OCI-LY7 (cell line): ENCODE measurements at regions of chr15 and their contacts with region 1.

Region 1: DNA sequence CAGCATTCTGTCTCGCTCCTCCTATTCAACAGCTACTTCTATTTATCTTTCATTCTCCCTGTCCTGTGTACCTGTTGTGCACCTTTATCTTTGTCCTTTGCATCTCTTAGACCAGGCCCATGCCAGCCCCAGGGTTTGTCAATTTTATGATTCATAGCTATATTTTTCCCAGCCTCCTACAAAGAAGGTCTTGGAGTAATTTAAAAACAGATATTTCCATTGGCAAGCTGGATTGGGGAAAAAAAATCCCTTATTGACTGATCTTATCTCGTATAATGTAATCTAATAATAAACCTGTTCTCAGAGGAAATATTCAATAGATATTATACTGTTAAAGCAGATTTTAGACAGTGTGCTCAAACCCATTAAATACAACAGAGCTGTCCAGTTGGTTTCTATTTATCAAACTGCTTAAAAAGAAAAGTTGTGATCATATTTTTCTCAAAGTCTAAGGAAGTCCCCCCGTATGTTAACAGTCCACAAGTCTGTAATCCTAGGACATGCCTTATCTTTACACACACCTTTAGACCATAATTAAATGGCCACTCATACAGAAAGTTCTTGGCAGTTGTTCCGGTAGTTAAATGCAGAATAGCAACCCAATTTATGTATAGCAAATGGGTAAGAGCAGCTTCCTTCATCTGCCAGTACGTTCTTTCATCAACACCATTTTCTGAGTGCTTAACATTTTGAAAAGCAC is 700.9 kb upstream of the NR2F2 start:
- DNase-seq: no peak
- H3K4me3 ChIP-seq: no peak overlapping the region
- H3K27ac ChIP-seq: no peak overlapping the region
- H3K4me1 ChIP-seq: no peaks in the 10 kb centered on the region
- CTCF ChIP-seq: no peak

Region 2: DNA sequence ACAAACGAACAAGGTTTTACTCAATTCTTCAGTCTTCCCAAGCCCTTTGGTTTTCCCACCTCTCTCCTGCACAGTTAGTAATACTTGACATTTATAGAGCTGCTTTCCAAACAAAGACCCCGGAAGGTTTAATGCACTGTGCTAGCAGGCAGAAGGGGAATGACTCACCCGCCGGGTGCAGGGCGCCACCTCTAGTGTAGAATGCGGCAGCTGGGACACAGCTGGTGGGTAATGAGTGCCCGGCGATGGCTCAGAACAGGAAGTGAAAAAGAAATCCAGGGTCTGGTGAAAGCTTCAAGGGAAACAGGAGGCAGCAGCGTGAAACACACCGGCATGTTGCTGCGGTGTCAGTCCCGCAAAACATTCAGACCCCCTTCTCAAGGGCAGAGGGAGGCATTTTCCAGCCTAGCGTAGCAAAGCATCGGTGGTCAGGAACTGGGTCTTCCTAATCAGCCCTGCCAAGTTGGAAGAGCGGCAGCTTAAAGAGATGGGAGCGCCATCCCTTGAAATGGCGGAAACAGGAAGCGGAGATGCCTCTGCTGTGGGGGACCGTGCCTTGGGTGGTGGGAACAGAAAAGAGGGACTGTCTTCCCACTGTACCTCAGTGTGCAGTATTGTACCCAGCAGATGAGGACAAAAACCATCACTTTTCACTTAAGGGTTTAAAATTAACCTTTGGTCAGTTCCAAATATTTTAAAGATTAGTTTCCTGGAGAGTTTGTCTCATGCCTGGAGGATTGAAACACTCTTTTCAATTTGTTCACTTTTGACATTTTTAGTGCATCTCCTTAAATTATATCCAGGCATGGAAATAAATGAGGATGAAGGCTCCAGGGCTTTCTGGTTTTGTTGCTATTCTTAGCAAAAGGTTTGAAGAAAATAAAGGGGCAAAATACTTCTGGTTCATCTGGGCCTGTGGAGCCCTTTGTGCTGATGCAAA is 1559.0 kb before region 1 on chr15:
- CTCF ChIA-PET with region 1: no interaction called
- POLR2A ChIA-PET with region 1: no interaction called
- intact Hi-C with region 1: no loop called
- DNase-seq: no peak
- H3K4me3 ChIP-seq: no peak overlapping the region
- H3K27ac ChIP-seq: no peak overlapping the region
- H3K4me1 ChIP-seq: no peaks in the 10 kb centered on the region
- CTCF ChIP-seq: no peak

Region 3: GRCh38 chr15:96565266-96565665 is 935.7 kb after region 1 on chr15:
- CTCF ChIA-PET with region 1: no interaction called
- POLR2A ChIA-PET with region 1: no interaction called
- intact Hi-C with region 1: loop called (anchors 5 kb)
- DNase-seq: no peak
- H3K4me3 ChIP-seq: no peak overlapping the region
- H3K27ac ChIP-seq: no peak overlapping the region
- H3K4me1 ChIP-seq: no peaks in the 10 kb centered on the region
- CTCF ChIP-seq: no peak